ENCODE measurements at regions of chr11 and their contacts with region 1.

Region 1: DNA sequence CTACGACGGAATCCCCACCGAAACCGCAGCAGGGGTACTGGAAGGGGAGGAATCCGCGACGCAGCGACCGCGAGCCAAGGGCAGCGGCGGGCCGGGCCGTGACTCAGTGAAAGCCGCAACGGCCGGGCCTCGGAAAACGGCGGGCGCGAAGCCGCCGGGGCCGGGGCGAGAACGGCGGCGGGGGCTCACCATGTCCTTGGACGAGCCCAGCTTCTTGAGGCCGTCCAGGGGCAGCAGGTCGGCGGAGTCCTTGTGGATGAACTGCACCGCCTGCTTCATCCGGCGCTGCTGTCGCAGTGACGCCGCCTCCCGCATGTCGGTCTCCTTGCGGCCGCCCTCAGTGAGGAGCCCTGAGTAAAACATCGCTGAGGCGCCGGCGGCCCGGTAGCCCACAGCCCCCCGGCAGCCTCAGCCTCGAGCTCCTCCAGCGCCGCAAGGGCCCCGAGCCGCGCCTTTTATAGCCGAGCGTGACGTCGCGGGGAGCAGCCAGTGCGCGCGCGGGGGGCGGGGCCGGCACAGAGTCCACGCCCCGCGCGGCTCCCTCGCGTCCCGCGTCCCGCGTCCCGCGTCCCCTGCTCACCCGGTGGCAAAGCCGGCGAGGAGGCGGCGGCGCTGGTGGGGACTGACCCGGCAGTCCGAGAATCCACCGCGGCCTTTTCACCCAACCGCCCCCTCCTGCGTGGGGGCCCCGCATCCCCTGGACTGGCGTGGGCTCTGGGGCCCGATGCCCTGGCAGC is at the start of gene NRIP3:
- DNase-seq: peak; percentile 73
- H3K4me3 Mint-ChIP-seq: peak within 1 kb of the TSS; percentile 83
- H3K27ac Mint-ChIP-seq: peak within 1 kb of the TSS; percentile 76
- H3K4me1 Mint-ChIP-seq: peaks cover 31% of the 10 kb centered on the region
- H3K27me3 Mint-ChIP-seq: peaks cover 36% of the 10 kb centered on the region
- total RNA-seq, gene NRIP3: 4.4 and 4.8 TPM in 2 replicates

Region 2: DNA sequence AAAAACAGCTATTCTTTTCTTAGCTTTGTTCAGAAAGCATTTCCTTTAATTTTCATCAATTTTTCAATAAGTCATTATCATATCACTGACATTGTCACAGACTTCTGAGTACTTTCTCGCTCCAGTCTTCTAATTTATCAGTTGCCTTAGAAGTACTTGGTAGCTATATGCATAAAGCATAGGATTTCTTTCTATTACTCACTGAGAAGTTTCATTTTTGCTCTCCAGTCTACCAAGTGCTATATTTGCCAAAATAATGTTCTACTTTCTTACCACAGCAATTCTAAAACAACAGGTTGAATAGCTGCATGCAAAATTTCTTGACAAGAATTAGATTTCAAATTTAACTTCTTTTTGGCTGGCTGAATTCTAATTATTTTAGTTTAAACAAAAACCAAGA is 526.1 kb before region 1 on chr11:
- intact Hi-C with region 1: no loop called
- DNase-seq: no peak
- H3K4me3 Mint-ChIP-seq: no peak overlapping the region
- H3K27ac Mint-ChIP-seq: no peak overlapping the region
- H3K4me1 Mint-ChIP-seq: no peaks in the 10 kb centered on the region
- H3K27me3 Mint-ChIP-seq: peaks cover 4% of the 10 kb centered on the region

Region 3: DNA sequence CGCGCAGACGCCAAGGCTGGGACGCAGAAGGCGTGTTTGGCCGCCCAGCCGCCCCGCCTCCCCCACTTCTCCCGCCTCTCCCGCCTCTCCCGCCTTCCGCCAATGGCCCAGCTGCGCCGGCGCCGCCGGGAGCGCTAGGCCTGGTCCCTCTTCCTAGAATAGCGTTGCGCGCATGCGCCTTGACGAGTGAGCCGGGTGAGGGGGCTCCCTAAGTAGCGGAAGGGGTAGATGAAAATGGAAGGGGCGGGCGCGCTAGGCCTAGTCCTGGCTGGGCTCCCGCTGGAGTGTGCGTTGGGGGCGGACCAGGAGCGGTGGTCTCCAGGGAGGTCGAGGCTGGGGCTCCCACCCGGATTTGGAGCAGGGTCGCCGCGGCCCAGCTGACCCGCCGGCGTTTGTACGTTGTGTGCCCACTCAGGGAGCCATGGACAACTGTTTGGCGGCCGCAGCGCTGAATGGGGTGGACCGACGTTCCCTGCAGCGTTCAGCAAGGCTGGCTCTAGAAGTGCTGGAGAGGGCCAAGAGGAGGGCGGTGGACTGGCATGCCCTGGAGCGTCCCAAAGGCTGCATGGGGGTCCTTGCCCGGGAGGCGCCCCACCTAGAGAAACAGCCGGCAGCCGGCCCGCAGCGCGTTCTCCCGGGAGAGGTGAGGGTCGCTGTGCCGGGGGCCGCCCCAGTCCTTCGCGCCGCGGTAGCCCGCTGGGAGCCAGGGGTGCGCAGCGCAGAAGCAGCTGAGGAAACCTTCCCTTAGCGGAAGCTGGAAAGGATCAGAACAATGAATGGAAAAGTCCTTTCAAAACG is 92.5 kb before region 1 on chr11 and contains the start of gene AKIP1:
- intact Hi-C with region 1: loop called (anchors 1 kb)
- DNase-seq: peak; percentile 77
- H3K4me3 Mint-ChIP-seq: peak within 1 kb of the TSS; percentile 97
- H3K27ac Mint-ChIP-seq: peak within 1 kb of the TSS; percentile 87
- H3K4me1 Mint-ChIP-seq: peaks cover 45% of the 10 kb centered on the region
- H3K27me3 Mint-ChIP-seq: peaks cover 12% of the 10 kb centered on the region
- total RNA-seq, gene AKIP1: 33.4 and 36.9 TPM in 2 replicates

Region 4: DNA sequence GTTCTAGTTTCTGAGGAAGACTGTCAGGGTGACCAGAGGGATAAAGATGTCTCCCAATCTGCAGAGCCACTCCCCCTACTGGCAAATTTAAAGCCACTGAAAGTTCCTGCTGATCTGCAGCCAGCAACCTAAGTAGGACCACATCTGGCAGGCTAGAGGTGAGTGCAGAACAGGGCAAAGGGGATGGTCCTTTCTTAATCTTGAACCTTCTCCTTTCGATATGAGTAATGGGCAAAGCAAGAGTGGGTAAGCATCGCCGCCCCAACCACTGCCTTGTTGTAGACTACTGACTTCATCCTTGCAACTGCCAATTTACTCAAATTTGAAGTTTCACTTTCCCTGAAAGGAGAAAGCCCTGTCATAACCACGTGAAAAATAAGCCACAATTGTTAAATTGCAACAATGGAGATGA is 57.0 kb after region 1 on chr11:
- intact Hi-C with region 1: loop called (anchors 1 kb)
- DNase-seq: peak; percentile 48
- H3K4me3 Mint-ChIP-seq: no peak overlapping the region
- H3K27ac Mint-ChIP-seq: peak overlapping the region; percentile 40
- H3K4me1 Mint-ChIP-seq: peaks cover 12% of the 10 kb centered on the region
- H3K27me3 Mint-ChIP-seq: peaks cover 16% of the 10 kb centered on the region

Region 5: DNA sequence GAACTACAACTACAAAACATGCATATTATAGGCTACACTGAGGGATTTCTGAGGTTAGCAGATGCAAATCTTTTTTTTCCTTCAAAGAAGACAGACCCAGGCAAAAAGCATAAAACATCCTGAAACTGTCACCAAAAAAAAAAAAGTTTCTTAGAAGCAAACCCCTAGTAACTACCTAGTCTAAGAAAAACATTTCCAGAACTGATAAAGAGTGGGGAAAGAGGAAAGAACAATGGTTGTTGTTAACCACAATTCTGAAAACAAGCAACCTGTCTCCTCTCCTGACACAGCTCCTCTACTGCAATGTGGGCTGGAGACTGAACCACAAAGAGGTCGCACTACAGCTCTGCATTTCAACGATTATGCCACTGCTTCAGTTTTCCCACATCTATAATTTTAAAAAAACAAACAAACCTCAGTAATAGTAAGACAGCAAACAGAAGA is 246.4 kb after region 1 on chr11:
- intact Hi-C with region 1: loop called (anchors 5 kb)
- DNase-seq: peak; percentile 36
- H3K4me3 Mint-ChIP-seq: peak overlapping the region; percentile 38
- H3K27ac Mint-ChIP-seq: peak overlapping the region; percentile 50
- H3K4me1 Mint-ChIP-seq: peaks cover 61% of the 10 kb centered on the region
- H3K27me3 Mint-ChIP-seq: peaks cover 1% of the 10 kb centered on the region

Region 6: GRCh38 chr11:9384535-9385303 is 381.0 kb after region 1 on chr11 and contains the start of gene IPO7:
- intact Hi-C with region 1: loop called (anchors 5 kb)
- DNase-seq: peak; percentile 87
- H3K4me3 Mint-ChIP-seq: peak within 1 kb of the TSS; percentile 96
- H3K27ac Mint-ChIP-seq: peak within 1 kb of the TSS; percentile 95
- H3K4me1 Mint-ChIP-seq: peaks cover 36% of the 10 kb centered on the region
- H3K27me3 Mint-ChIP-seq: no peaks in the 10 kb centered on the region
- total RNA-seq, gene IPO7: 136 and 153 TPM in 2 replicates

Region 7: GRCh38 chr11:10293423-10294289 is 1289.9 kb after region 1 on chr11 and contains the start of gene SBF2:
- intact Hi-C with region 1: loop called (anchors 10 kb)
- DNase-seq: peak; percentile 69
- H3K4me3 Mint-ChIP-seq: peak within 1 kb of the TSS; percentile 80
- H3K27ac Mint-ChIP-seq: peak within 1 kb of the TSS; percentile 64
- H3K4me1 Mint-ChIP-seq: peaks cover 31% of the 10 kb centered on the region
- H3K27me3 Mint-ChIP-seq: peaks cover 61% of the 10 kb centered on the region
- total RNA-seq, gene SBF2: 5.3 and 5.4 TPM in 2 replicates